ENCODE measurements at regions of chr7 and their contacts with region 1.

Region 1: GRCh38 chr7:80134536-80135320 is at the start of gene GNAI1:
- DNase-seq: peak; percentile 98
- H3K4me3 ChIP-seq: peak within 1 kb of the TSS; percentile 95 to 99
- H3K27ac ChIP-seq: peak within 1 kb of the TSS; percentile 80 to 96
- H3K4me1 ChIP-seq: peaks cover 25 to 26% of the 10 kb centered on the region in 2 experiments
- H3K27me3 ChIP-seq: no peaks in the 10 kb centered on the region
- CTCF ChIP-seq: peak; percentile 60
- EP300 ChIP-seq: no peak
- RAD21 ChIP-seq: peak; percentile 75
- polyA plus RNA-seq, gene GNAI1: 67.4 and 69.1 TPM in 2 replicates

Region 2: GRCh38 chr7:79968077-79968648 is 166.6 kb before region 1 on chr7:
- CTCF ChIA-PET with region 1: no interaction called
- POLR2A ChIA-PET with region 1: no interaction called
- DNase-seq: no peak
- H3K4me3 ChIP-seq: no peak overlapping the region
- H3K27ac ChIP-seq: no peak overlapping the region
- H3K4me1 ChIP-seq: peaks cover 0 to 7% of the 10 kb centered on the region in 2 experiments; a peak in 2 of 4 replicates
- H3K27me3 ChIP-seq: no peaks in the 10 kb centered on the region
- CTCF ChIP-seq: no peak
- EP300 ChIP-seq: no peak
- RAD21 ChIP-seq: no peak

Region 3: GRCh38 chr7:80060218-80060806 is 74.4 kb before region 1 on chr7:
- CTCF ChIA-PET with region 1: interaction called, 26 read pairs
- POLR2A ChIA-PET with region 1: no interaction called
- DNase-seq: peak; percentile 44
- H3K4me3 ChIP-seq: no peak overlapping the region
- H3K27ac ChIP-seq: no peak overlapping the region
- H3K4me1 ChIP-seq: peaks cover 0 to 3% of the 10 kb centered on the region in 2 experiments; a peak in 2 of 4 replicates
- H3K27me3 ChIP-seq: no peaks in the 10 kb centered on the region
- CTCF ChIP-seq: peak; percentile 87
- EP300 ChIP-seq: no peak
- RAD21 ChIP-seq: peak; percentile 83

Region 4: DNA sequence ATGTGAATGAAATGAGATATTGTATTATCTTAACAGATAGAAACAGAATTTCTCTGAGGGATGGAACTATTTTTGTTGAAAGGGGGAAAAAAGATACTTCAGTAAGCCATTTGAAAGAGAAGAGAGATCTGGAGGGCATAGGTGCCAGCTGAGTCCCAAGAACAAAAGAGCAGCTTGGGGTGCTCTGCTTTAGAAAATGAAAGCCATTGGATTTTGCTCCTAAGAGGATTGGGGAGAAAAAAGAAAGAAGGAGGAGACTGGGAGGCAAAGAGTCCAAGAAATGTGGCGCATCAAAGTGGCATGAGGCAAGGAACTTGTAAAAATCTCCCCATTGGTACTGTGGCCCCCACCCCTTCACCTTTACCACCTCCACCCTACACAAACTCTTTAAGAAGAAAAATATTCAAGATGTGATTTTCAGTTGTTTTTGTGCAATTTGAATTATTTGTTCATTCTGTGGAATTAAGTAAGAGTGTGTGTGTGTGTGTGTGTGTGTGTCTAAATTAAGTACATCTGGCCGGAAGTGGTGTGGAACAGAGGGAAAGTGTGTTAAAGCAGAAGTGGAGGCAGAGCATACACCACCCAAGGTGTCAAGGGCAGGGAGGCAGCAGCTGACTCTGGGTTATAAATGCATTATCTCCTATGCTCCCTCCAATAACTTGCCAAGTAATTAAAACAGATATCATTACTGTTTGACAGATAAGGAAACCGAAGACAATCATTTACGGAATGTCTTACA is 10.0 kb before region 1 on chr7:
- CTCF ChIA-PET with region 1: interaction called, 10 read pairs
- POLR2A ChIA-PET with region 1: no interaction called
- DNase-seq: no peak
- H3K4me3 ChIP-seq: no peak overlapping the region
- H3K27ac ChIP-seq: no peak overlapping the region
- H3K4me1 ChIP-seq: no peaks in the 10 kb centered on the region
- H3K27me3 ChIP-seq: no peaks in the 10 kb centered on the region
- CTCF ChIP-seq: no peak
- EP300 ChIP-seq: no peak
- RAD21 ChIP-seq: no peak

Region 5: DNA sequence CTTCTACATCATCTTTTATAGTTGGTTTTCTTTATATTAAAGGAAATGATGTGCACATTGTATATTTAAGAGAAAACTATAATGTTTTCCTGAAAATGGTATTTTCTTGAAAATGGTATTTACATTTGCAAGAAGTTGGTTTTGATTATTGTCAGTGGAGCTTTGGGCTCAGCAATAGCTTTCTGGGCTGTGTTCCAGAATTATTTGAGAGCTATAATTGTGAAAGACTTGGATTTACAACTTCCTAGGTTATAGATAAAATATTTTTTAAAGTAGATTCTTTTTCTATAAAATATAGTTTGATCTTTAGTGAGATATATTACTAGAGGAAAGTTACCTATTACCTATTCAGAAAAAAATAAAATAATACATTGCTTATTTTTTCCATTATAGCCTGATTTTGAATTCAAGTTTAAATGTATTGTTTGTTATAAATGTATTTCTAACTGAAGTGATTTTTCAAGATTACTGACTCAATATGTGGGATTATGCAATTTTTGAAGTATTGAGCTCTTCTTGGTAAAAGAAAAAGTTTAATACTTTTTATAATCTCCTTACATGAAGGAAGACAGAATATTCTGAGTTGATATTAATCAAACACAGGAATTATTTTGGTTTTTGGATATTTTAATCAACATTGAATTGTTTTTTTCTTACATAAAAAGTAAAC is 20.1 kb after region 1 on chr7:
- CTCF ChIA-PET with region 1: interaction called, 23 read pairs
- POLR2A ChIA-PET with region 1: no interaction called
- DNase-seq: no peak
- H3K4me3 ChIP-seq: no peak overlapping the region
- H3K27ac ChIP-seq: peak overlapping the region; percentile 21 to 65; a peak in 3 of 4 replicates
- H3K4me1 ChIP-seq: peaks cover 22 to 26% of the 10 kb centered on the region in 2 experiments
- H3K27me3 ChIP-seq: no peaks in the 10 kb centered on the region
- CTCF ChIP-seq: no peak
- EP300 ChIP-seq: 0 out of 4 replicates have a peak, but pooled peaks of 1 of the 2 experiments have one; percentile 14
- RAD21 ChIP-seq: no peak

Region 6: DNA sequence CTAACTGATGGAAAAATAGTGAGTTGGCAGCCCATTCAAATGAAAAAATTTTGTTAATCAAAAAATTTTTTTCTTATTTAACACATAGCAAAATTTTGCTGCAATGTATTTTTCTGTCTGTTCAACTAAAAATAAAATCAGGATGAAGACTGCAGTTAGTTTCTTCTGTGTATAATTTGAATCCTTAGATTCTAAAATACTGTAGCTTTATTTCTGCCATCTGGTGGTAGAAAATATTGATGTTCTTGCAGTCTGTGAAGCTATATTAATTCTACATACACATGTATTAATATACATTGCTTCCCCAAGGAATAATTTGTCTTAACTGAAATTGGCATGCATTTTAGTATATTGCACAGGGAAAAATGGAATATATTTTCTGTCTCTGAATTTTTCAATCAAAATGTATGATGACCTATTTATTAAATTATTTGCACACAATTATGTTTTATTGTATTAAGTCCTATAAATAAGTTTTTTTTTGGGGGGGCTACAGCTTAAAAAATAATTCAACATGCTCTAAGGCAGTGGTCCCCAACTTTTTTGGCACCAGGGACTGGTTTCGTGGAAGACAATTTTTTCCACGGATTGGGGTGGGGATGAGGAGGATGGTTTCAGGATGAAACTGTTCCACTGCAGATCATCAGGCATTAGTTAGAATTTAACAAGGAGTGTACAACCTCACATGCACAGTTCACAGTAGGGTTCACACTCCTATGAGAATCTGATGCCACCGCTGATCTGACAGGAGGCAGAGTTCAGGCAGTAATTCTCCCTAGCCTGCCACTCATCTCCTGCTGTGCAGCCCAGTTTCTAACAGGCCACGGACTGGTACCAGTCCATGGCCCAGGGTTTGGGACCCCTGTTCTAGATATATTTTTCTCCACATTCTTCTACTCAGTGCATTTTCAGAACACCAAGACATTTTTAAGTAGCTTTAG is 257.8 kb after region 1 on chr7:
- CTCF ChIA-PET with region 1: interaction called, 164 read pairs
- POLR2A ChIA-PET with region 1: interaction called, 10 read pairs
- DNase-seq: peak; percentile 20
- H3K4me3 ChIP-seq: no peak overlapping the region
- H3K27ac ChIP-seq: peak overlapping the region in 1 of 2 experiments; percentile 16; a peak in 1 of 4 replicates
- H3K4me1 ChIP-seq: peaks cover 0 to 9% of the 10 kb centered on the region in 2 experiments; a peak in 2 of 4 replicates
- H3K27me3 ChIP-seq: no peaks in the 10 kb centered on the region
- CTCF ChIP-seq: peak; percentile 86
- EP300 ChIP-seq: no peak
- RAD21 ChIP-seq: peak; percentile 70

Region 7: GRCh38 chr7:80453699-80454340 is 319.1 kb after region 1 on chr7:
- CTCF ChIA-PET with region 1: interaction called, 18 read pairs
- POLR2A ChIA-PET with region 1: no interaction called
- DNase-seq: peak; percentile 45
- H3K4me3 ChIP-seq: no peak overlapping the region
- H3K27ac ChIP-seq: peak overlapping the region in 1 of 2 experiments; percentile 9; a peak in 1 of 4 replicates
- H3K4me1 ChIP-seq: peaks cover 0 to 5% of the 10 kb centered on the region in 2 experiments; a peak in 2 of 4 replicates
- H3K27me3 ChIP-seq: no peaks in the 10 kb centered on the region
- CTCF ChIP-seq: peak; percentile 93
- EP300 ChIP-seq: no peak
- RAD21 ChIP-seq: peak; percentile 91

Measured in SK-N-SH (cell line).